Cardiac septum (tissue), 1 donor: ENCODE measurements at regions of chr11 and their contacts with region 1.

Region 1: GRCh38 chr11:61581030-61581928 is at the start of gene SYT7:
- DNase-seq: peak; percentile 96
- total RNA-seq, gene SYT7: 9.3 TPM

Region 2: DNA sequence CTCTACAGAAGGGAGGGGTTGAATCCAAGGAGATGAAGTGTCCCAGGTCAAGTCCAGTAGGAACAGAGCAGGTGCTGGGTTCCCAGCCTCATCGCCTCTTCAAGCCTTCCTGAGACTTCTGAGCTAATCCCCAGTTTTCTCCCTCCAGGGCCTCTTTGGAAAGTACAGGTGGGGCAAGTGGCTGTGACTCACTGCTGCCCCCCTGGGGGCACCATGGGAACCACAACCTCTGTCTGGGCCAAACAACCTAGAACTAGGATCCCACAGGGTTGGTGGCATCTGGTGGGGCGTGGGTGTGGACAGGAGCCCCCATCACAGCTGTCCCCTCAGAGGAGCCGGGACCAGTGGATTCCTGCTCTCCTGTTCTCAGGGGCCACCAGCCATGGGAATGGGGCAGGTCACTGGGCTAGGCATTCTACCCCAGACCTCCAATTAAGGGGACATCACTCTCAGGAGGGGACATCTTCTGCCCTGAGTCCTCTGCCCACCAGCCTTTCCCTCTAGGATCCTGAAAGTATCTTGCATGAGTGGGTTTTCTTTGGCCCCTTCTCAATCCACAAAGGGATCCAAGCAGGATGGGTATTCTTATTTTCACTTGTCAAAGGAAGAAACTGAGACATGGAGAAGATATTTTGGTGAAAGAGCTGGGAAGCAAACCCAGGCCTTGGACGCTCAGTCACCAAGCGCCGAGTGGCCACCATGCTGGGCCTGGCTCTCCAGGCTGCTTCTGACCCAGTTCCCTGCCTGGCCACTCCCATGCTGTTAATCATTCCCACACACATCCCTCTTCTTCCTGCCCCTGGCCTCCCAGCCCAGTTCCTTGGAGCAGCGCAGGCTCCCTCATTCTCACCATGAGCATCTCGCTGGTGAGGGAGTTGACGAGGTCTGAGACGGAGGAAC is 48.9 kb before region 1 on chr11:
- intact Hi-C with region 1: loop called (anchors 2 kb)
- DNase-seq: no peak

Region 3: DNA sequence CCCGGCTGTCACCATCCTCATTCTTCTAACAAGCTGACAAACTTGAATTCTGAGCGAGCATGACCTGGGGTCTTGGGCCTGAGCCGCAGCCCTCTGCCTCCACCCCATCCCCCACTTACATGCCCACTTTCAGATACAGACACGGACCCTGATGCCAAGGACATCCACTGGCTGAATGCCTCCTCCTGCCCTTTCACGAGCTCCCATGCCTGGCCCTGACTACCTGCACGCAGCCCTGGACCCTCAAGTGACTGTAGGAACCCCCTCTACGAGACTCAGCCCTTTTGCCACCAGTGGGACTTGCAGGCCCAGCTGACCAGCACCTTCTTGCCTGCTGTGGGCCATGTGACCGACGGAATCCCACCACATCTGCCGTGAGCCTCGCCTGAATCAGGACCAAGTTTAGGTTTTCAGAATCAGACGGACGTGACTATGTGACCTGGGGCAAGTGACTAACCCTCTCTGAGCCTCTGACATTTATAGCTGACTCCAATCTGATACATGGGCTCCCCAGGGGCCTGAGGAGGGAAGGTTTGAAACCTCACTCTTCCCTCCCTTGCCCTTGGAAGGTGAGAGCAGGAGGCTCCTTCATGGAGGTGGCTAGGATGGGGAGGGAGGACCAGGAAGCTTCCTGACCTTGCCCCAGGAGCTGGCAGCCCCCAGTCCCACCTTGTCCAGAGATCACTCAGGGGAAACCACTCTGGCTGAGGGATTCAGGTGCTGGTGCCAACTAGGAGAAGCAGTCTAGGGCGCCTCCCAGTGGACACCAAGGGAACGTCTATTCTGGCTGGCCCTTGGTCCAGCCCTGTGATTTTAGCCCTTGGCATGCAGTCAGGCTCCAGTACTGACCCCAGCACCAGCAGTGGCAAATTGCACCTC is 46.5 kb after region 1 on chr11:
- intact Hi-C with region 1: loop called (anchors 2 kb)
- DNase-seq: peak; percentile 83